ENCODE measurements at regions of chr18 and their contacts with region 1.

Region 1: DNA sequence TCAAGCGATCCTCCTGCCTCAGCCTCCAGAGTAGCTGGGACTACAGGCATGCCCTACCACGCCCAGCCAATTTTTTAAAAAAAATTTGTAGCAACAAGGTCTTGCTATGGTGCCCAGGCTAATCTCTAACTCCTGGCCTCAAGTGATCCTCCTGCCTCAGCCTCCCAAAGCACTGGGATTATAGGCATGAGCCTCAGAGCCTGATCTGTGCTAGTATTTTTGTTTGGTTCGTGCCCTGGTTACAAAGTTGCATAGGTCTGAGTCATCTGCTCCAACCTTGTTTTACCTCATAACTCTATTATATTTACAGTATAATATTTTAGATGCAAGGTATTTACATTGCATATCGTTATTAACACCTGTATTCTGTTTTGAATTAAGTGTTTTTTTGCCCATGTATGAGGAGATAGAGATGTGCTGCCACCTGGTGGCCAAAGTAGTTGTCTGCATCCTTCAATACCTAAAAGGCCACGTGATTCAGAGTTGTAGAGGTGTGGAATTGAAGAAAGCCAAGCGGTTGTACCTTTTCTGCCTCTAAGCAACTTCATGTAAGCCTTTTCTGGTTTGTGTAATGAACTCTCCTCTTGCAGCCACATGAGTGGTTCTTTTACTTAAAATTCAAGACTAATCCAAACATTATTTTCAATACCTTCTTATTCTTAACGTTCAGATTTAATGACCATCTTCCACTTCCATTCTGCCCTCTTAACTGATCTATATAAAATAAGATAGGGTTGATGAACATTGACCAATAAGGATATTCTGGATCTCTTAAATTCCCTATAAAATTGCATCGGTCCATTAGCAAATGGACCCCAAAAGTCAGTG is 19.9 kb upstream of the CABYR start:
- DNase-seq: peak; percentile 35 to 56
- ATAC-seq: peak; percentile 57 to 86 (median 72)
- H3K4me3 ChIP-seq: no peak overlapping the region
- H3K27ac ChIP-seq: no peak overlapping the region
- H3K4me1 ChIP-seq: peaks cover 0 to 7% (median 0%) of the 10 kb centered on the region in 9 donors
- H3K27me3 ChIP-seq: no peaks in the 10 kb centered on the region
- CTCF ChIP-seq: peak; percentile 81 to 95 (median 93)

Region 2: GRCh38 chr18:23629444-23629946 is 489.5 kb before region 1 on chr18:
- intact Hi-C with region 1: loop called in 5 of 10 experiments (anchors 5 to 10 kb)
- DNase-seq: no peak
- ATAC-seq: no peak
- H3K4me3 ChIP-seq: no peak overlapping the region
- H3K27ac ChIP-seq: no peak overlapping the region
- H3K4me1 ChIP-seq: peaks cover 0 to 21% (median 8%) of the 10 kb centered on the region in 9 donors
- H3K27me3 ChIP-seq: no peaks in the 10 kb centered on the region
- CTCF ChIP-seq: no peak

Region 3: GRCh38 chr18:23828426-23828825 is 290.5 kb before region 1 on chr18:
- intact Hi-C with region 1: loop called in 4 of 10 experiments (anchors 5 to 10 kb)
- DNase-seq: no peak
- ATAC-seq: peak in 1 of 8 donors; percentile 23
- H3K4me3 ChIP-seq: no peak overlapping the region
- H3K27ac ChIP-seq: no peak overlapping the region
- H3K4me1 ChIP-seq: peaks cover 0 to 31% (median 11%) of the 10 kb centered on the region in 9 donors
- H3K27me3 ChIP-seq: no peaks in the 10 kb centered on the region
- CTCF ChIP-seq: no peak

Region 4: DNA sequence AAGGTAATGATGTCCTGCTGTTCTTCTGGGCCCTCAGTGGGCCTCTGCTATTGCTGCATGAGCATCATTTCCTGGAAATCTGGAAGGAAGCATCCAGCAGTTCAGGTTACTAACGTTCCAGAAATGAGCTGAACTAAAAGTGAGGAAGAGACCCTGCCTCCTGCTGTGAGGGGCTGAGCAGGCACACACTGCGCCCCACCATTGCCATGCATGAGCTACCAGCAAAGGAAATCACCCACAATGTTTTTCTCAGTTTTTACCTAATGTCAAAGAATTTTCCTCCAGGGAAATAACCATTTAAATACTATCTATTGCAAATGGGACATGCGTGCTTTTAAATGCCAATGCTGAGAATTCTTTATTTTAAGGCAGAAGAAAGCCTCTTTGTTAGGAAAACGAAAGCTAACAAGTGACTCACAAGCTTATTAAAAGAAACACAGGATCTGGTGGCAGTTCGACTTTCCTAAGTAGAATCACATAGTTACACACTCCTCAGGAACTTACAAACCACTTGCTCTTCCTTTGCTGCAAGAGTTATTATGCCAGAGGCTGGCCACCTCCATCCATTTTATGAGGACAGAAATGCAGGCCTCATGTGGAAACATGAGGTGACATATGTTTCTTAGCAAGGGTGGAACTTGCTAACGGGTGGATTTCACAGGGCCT is 257.0 kb before region 1 on chr18:
- intact Hi-C with region 1: no loop called
- DNase-seq: no peak
- ATAC-seq: peak in 5 of 8 donors; percentile 20 to 41 (median 35)
- H3K4me3 ChIP-seq: no peak overlapping the region
- H3K27ac ChIP-seq: peak overlapping the region in 6 of 10 donors; percentile 22 to 53 (median 36)
- H3K4me1 ChIP-seq: peaks cover 0 to 28% (median 0%) of the 10 kb centered on the region in 9 donors
- H3K27me3 ChIP-seq: no peaks in the 10 kb centered on the region
- CTCF ChIP-seq: no peak

Region 5: GRCh38 chr18:23918401-23919032 is 200.4 kb before region 1 on chr18:
- intact Hi-C with region 1: no loop called
- DNase-seq: peak; percentile 66 to 69
- ATAC-seq: peak in 7 of 8 donors; percentile 64 to 78 (median 70)
- H3K4me3 ChIP-seq: no peak overlapping the region
- H3K27ac ChIP-seq: no peak overlapping the region
- H3K4me1 ChIP-seq: peaks cover 0 to 6% (median 0%) of the 10 kb centered on the region in 9 donors
- H3K27me3 ChIP-seq: no peaks in the 10 kb centered on the region
- CTCF ChIP-seq: peak; percentile 75 to 93 (median 87)

Region 6: GRCh38 chr18:23967321-23968089 is 151.5 kb before region 1 on chr18:
- intact Hi-C with region 1: loop called in 6 of 10 experiments (anchors 2 to 10 kb)
- DNase-seq: no peak
- ATAC-seq: peak in 1 of 8 donors; percentile 33
- H3K4me3 ChIP-seq: no peak overlapping the region
- H3K27ac ChIP-seq: no peak overlapping the region
- H3K4me1 ChIP-seq: peaks cover 0 to 17% (median 0%) of the 10 kb centered on the region in 9 donors
- H3K27me3 ChIP-seq: no peaks in the 10 kb centered on the region
- CTCF ChIP-seq: no peak

Region 7: DNA sequence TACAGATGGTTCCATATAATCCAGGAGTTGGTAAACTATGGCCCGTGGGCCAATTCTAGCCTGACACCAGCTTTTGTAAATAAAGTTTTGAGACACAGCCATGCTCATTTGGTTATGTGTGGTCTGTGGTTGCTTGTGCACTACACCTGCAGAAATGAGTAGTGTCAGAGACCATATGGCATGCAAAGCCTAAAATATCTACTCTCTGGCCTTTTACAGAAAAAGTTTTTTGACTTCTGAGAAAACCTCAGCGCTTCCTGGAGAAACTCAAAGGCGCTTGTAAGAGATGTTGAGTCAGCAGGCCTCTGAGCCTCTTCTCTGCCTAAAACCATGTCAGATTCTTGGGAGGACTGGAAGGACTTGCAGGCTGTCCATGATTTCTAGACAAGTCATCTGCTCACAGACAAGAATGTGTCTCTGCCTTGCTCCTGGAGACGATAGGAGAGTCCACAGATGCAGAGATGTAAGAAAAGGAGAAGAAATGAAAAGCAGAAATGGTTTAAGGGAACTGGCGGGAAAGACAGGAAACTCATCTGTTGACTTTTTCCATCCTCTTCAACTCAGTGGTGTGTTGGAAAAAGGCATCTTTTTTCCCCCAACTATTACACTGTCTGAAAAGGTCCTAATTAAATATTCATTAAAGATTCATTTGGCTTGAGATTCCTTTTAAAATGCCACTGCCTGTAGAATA is 99.2 kb before region 1 on chr18:
- intact Hi-C with region 1: loop called in 3 of 10 experiments (anchors 5 to 10 kb)
- DNase-seq: no peak
- ATAC-seq: no peak
- H3K4me3 ChIP-seq: no peak overlapping the region
- H3K27ac ChIP-seq: peak overlapping the region in 1 of 10 donors; percentile 22
- H3K4me1 ChIP-seq: peaks cover 0 to 86% (median 10%) of the 10 kb centered on the region in 9 donors
- H3K27me3 ChIP-seq: no peaks in the 10 kb centered on the region
- CTCF ChIP-seq: no peak

Region 8: GRCh38 chr18:24246143-24246542 is 127.2 kb after region 1 on chr18:
- intact Hi-C with region 1: no loop called
- DNase-seq: no peak
- ATAC-seq: no peak
- H3K4me3 ChIP-seq: no peak overlapping the region
- H3K27ac ChIP-seq: no peak overlapping the region
- H3K4me1 ChIP-seq: peaks cover 0 to 76% (median 29%) of the 10 kb centered on the region in 9 donors
- H3K27me3 ChIP-seq: no peaks in the 10 kb centered on the region
- CTCF ChIP-seq: no peak

Region 9: GRCh38 chr18:24274837-24275236 is 155.9 kb after region 1 on chr18:
- intact Hi-C with region 1: no loop called
- DNase-seq: peak; percentile 23
- ATAC-seq: no peak
- H3K4me3 ChIP-seq: peak overlapping the region in 2 of 10 donors; percentile 0 to 6
- H3K27ac ChIP-seq: peak overlapping the region in 9 of 10 donors; percentile 3 to 63 (median 31)
- H3K4me1 ChIP-seq: peaks cover 0 to 57% (median 29%) of the 10 kb centered on the region in 9 donors
- H3K27me3 ChIP-seq: peaks cover 0 to 4% (median 0%) of the 10 kb centered on the region in 7 donors
- CTCF ChIP-seq: no peak

Measured in heart right ventricle (tissue), 16 donors.